WTC11 (cell line): ENCODE measurements at regions of chr13 and their contacts with region 1.

Region 1: GRCh38 chr13:102091231-102091630 is 310.6 kb downstream of the FGF14 start:
- DNase-seq: peak; percentile 61
- ATAC-seq: peak; percentile 100
- H3K4me3 Mint-ChIP-seq: no peak overlapping the region
- H3K27ac Mint-ChIP-seq: no peak overlapping the region
- H3K4me1 Mint-ChIP-seq: no peaks in the 10 kb centered on the region
- H3K27me3 Mint-ChIP-seq: no peaks in the 10 kb centered on the region
- CTCF ChIP-seq: no peak

Region 2: GRCh38 chr13:101942038-101942437 is 149.2 kb before region 1 on chr13:
- CTCF ChIA-PET with region 1: interaction called, 26 read pairs
- POLR2A ChIA-PET with region 1: no interaction called
- DNase-seq: peak; percentile 33
- ATAC-seq: peak; percentile 89
- H3K4me3 Mint-ChIP-seq: no peak overlapping the region
- H3K27ac Mint-ChIP-seq: no peak overlapping the region
- H3K4me1 Mint-ChIP-seq: 0 out of 2 replicates have a peak, but pooled peaks cover 3% of the 10 kb centered on the region
- H3K27me3 Mint-ChIP-seq: no peaks in the 10 kb centered on the region
- CTCF ChIP-seq: 0 out of 2 replicates have a peak, but pooled peaks have one; percentile 33

Region 3: GRCh38 chr13:101970339-101970738 is 120.9 kb before region 1 on chr13:
- CTCF ChIA-PET with region 1: no interaction called
- POLR2A ChIA-PET with region 1: no interaction called
- DNase-seq: no peak
- ATAC-seq: peak; percentile 87
- H3K4me3 Mint-ChIP-seq: no peak overlapping the region
- H3K27ac Mint-ChIP-seq: peak overlapping the region; percentile 90
- H3K4me1 Mint-ChIP-seq: peaks cover 28% of the 10 kb centered on the region
- H3K27me3 Mint-ChIP-seq: no peaks in the 10 kb centered on the region
- CTCF ChIP-seq: no peak